Vagina (tissue), 2 donors: ENCODE measurements at regions of chr1 and their contacts with region 1.

Region 1: GRCh38 chr1:64136752-64137411 is 66.5 kb upstream of the UBE2U start:
- DNase-seq: peak in 1 of 2 donors; percentile 90
- H3K4me3 ChIP-seq: no peak overlapping the region
- H3K27ac ChIP-seq: no peak overlapping the region
- H3K4me1 ChIP-seq: peaks cover 13% of the 10 kb centered on the region
- H3K27me3 ChIP-seq: no peaks in the 10 kb centered on the region
- CTCF ChIP-seq: peak; percentile 70 to 83 (median 72)
- POLR2A ChIP-seq: no peak

Region 2: DNA sequence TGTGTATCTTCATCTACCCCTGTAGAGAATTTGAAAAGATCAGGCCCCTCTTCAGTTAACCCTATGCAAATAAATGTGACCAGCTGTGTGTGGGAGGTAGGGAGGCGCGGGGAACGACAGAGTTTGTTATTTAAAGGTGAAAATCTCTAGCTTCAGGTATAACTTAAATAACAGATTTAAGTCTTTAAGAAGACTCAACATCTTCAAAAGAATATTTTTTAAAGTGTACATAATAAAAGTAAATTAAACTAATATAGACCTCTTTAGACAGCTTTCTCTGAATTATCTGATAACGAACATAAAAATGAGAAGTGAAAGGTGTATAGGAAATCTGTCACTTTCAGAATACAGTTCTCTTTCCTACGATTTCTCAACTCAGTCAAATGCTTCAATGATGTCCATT is 1523.6 kb before region 1 on chr1:
- intact Hi-C with region 1: no loop called
- DNase-seq: no peak
- H3K4me3 ChIP-seq: no peak overlapping the region
- H3K27ac ChIP-seq: no peak overlapping the region
- H3K4me1 ChIP-seq: no peaks in the 10 kb centered on the region
- H3K27me3 ChIP-seq: no peaks in the 10 kb centered on the region
- CTCF ChIP-seq: no peak
- POLR2A ChIP-seq: no peak

Region 3: GRCh38 chr1:63773815-63774616 is 362.9 kb before region 1 on chr1 and contains the start of gene ROR1:
- intact Hi-C with region 1: loop called (anchors 5 kb)
- DNase-seq: peak in 1 of 2 donors; percentile 94
- H3K4me3 ChIP-seq: peak within 1 kb of the TSS; percentile 63 to 78
- H3K27ac ChIP-seq: peak within 1 kb of the TSS; percentile 93
- H3K4me1 ChIP-seq: peaks cover 23% of the 10 kb centered on the region
- H3K27me3 ChIP-seq: no peaks in the 10 kb centered on the region
- CTCF ChIP-seq: peak in 2 of 3 experiments; percentile 45 to 72
- POLR2A ChIP-seq: peak in 1 of 2 donors; percentile 49
- total RNA-seq, gene ROR1: 11.0 TPM

Region 4: DNA sequence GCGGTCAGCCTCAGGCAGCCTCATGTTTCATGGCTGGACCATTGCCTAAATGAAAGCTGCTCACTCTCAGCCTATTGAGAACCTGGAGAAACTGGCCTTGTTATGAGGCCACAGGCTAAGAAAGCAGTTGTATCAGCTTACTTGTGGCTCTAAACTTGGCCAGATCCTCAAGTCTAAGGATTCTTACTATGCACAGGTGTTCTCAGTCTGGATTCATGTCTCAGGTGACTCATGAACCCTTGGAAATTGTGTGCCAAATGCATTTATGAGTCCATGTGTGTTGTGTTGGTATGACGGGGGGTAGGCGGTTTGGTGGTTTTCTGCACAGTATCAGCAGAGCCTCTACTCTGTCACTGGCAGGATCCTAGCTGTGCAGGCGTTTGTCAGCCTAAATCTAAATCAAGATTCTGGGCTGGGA is 272.6 kb before region 1 on chr1:
- intact Hi-C with region 1: loop called (anchors 5 kb)
- DNase-seq: no peak
- H3K4me3 ChIP-seq: no peak overlapping the region
- H3K27ac ChIP-seq: no peak overlapping the region
- H3K4me1 ChIP-seq: peaks cover 82% of the 10 kb centered on the region
- H3K27me3 ChIP-seq: no peaks in the 10 kb centered on the region
- CTCF ChIP-seq: no peak
- POLR2A ChIP-seq: no peak